Naive thymus-derived CD4-positive, alpha-beta T cell (primary cell): ENCODE measurements at regions of chr3 and their contacts with region 1.

Region 1: GRCh38 chr3:16828815-16829214 is 55.9 kb upstream of the PLCL2 start:
- DNase-seq: peak in 6 of 9 donors; percentile 29 to 59 (median 42)
- ATAC-seq: peak; percentile 80
- H3K4me3 ChIP-seq: no peak overlapping the region
- H3K4me3 Mint-ChIP-seq: no peak overlapping the region
- H3K27ac ChIP-seq: no peak overlapping the region
- H3K27ac Mint-ChIP-seq: peak overlapping the region in 3 of 9 donors; percentile 23 to 53 (median 42)
- H3K4me1 ChIP-seq: peaks cover 11 to 15% of the 10 kb centered on the region in 2 donors
- H3K4me1 Mint-ChIP-seq: peaks cover 16 to 37% (median 19%) of the 10 kb centered on the region in 7 donors
- H3K27me3 ChIP-seq: no peaks in the 10 kb centered on the region
- H3K27me3 Mint-ChIP-seq: peaks cover 0 to 20% (median 0%) of the 10 kb centered on the region in 5 donors

Region 2: GRCh38 chr3:16511681-16512434 is 317.0 kb before region 1 on chr3:
- CTCF ChIA-PET with region 1: no interaction called
- POLR2A ChIA-PET with region 1: no interaction called
- intact Hi-C with region 1: no loop called
- DNase-seq: peak; percentile 43 to 90 (median 86)
- ATAC-seq: peak; percentile 86
- H3K4me3 ChIP-seq: peak overlapping the region; percentile 79
- H3K4me3 Mint-ChIP-seq: peak overlapping the region; percentile 82 to 98 (median 94)
- H3K27ac ChIP-seq: peak overlapping the region; percentile 88
- H3K27ac Mint-ChIP-seq: peak overlapping the region; percentile 87 to 99 (median 95)
- H3K4me1 ChIP-seq: peaks cover 56 to 71% of the 10 kb centered on the region in 2 donors
- H3K4me1 Mint-ChIP-seq: peaks cover 62 to 85% (median 75%) of the 10 kb centered on the region in 7 donors
- H3K27me3 ChIP-seq: no peaks in the 10 kb centered on the region
- H3K27me3 Mint-ChIP-seq: no peaks in the 10 kb centered on the region

Region 3: DNA sequence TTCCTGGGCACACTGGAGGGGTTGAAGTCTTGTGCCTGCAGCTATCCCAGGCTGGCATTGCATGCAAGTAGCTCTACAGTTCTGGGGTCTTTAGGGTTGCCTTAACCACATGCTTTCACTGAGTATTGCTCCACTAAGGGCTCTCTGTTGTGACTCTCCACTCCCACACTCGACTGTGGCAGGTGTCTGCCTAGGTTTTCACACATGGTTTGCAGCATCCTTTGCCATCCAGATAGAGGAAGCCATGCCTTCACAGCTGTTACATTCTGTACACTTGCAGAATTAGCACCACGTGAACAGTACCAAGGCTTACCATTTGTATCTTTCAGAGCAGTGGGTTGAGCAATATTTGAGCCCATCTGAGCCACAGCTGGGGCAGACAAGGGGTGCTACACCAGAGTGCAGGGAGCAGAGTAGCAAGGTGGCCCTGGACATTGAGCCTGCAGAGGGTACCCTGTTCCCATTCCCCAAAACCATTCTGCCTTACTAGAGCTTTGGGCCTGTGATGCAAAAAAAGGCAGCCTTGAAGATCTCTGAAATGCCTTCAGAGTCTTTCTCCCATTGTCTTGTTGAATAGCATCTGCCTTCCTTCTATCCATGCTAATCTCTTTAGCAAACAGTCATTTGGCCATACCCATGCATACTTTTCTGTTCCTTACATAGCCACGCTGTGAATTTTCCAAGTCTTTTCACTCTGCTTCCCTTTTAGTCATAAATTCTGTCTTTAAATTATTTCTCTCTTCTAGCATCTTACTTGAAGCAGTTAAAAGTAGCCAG is 39.3 kb before region 1 on chr3:
- CTCF ChIA-PET with region 1: no interaction called
- POLR2A ChIA-PET with region 1: no interaction called
- intact Hi-C with region 1: no loop called
- DNase-seq: no peak
- ATAC-seq: peak; percentile 86
- H3K4me3 ChIP-seq: no peak overlapping the region
- H3K4me3 Mint-ChIP-seq: no peak overlapping the region
- H3K27ac ChIP-seq: no peak overlapping the region
- H3K27ac Mint-ChIP-seq: no peak overlapping the region
- H3K4me1 ChIP-seq: peaks cover 0 to 17% of the 10 kb centered on the region in 2 donors
- H3K4me1 Mint-ChIP-seq: peaks cover 3 to 17% (median 7%) of the 10 kb centered on the region in 7 donors
- H3K27me3 ChIP-seq: no peaks in the 10 kb centered on the region
- H3K27me3 Mint-ChIP-seq: peaks cover 0 to 10% (median 0%) of the 10 kb centered on the region in 5 donors

Region 4: DNA sequence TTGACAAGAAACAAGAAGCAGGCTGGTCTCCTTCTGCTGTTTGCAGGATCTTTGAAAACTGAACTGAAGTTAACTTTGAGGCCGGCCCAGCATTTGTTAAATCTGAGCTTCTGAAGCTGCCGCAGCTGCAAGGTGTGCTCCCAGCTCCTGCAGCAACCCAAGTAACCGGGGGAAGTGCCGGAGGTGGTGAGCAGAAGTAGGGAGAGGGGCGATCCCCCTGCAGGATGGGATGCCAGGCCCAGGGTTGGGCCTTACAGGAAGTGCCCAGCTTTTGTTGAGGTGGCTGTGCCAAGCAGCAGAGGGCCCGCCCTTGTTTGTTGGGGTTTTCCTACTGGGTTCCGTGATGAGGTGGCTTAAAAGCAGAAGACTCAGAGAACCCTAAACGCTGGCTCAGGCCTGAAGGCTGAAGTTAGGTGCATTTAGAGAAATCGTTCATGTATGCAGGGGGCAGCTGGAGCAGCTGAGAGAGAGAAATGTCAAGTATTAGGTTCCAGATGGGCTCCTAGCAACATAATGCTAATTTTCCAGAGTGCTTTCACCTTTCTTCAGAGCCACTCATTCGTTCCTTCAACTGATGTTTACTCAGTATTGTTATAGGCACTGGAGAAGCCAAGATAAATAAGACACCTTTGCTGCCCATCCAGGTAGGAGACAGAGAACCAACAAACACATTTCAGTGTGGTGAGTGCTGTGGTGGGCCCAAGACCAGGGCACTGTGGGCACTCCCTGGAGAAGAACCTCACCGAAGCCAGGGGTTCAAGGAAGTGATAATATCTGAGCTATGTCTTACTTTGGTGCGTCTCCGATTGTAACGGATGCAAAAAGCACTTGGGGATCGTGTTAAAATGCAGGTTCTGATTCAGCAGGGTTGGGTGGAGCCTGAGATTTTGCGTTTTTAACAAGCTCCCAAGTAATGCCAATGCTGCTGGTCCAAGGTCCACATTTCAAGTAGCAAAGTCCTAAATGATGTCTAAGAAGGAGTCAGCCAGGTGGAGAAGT is 13.8 kb after region 1 on chr3:
- CTCF ChIA-PET with region 1: interaction called, 11 read pairs
- POLR2A ChIA-PET with region 1: interaction called, 16 read pairs
- intact Hi-C with region 1: loop called (anchors 1 kb)
- DNase-seq: peak; percentile 49 to 85 (median 78)
- ATAC-seq: peak; percentile 95
- H3K4me3 ChIP-seq: peak overlapping the region; percentile 61
- H3K4me3 Mint-ChIP-seq: peak overlapping the region; percentile 78 to 93 (median 87)
- H3K27ac ChIP-seq: peak overlapping the region; percentile 76
- H3K27ac Mint-ChIP-seq: peak overlapping the region; percentile 92 to 99 (median 98)
- H3K4me1 ChIP-seq: peaks cover 49 to 51% of the 10 kb centered on the region in 2 donors
- H3K4me1 Mint-ChIP-seq: peaks cover 34 to 96% (median 90%) of the 10 kb centered on the region in 7 donors
- H3K27me3 ChIP-seq: no peaks in the 10 kb centered on the region
- H3K27me3 Mint-ChIP-seq: peaks cover 0 to 6% (median 0%) of the 10 kb centered on the region in 5 donors

Region 5: GRCh38 chr3:16928386-16929132 is 99.7 kb after region 1 on chr3:
- CTCF ChIA-PET with region 1: no interaction called
- POLR2A ChIA-PET with region 1: no interaction called
- intact Hi-C with region 1: loop called in 1 of 2 experiments (anchors 5 kb)
- DNase-seq: no peak
- ATAC-seq: peak; percentile 42
- H3K4me3 ChIP-seq: no peak overlapping the region
- H3K4me3 Mint-ChIP-seq: peak overlapping the region in 8 of 10 donors; percentile 12 to 76 (median 44)
- H3K27ac ChIP-seq: no peak overlapping the region
- H3K27ac Mint-ChIP-seq: peak overlapping the region in 7 of 9 donors; percentile 2 to 74 (median 47)
- H3K4me1 ChIP-seq: peaks cover 6 to 40% of the 10 kb centered on the region in 2 donors
- H3K4me1 Mint-ChIP-seq: peaks cover 50 to 88% (median 83%) of the 10 kb centered on the region in 7 donors
- H3K27me3 ChIP-seq: no peaks in the 10 kb centered on the region
- H3K27me3 Mint-ChIP-seq: no peaks in the 10 kb centered on the region

Region 6: DNA sequence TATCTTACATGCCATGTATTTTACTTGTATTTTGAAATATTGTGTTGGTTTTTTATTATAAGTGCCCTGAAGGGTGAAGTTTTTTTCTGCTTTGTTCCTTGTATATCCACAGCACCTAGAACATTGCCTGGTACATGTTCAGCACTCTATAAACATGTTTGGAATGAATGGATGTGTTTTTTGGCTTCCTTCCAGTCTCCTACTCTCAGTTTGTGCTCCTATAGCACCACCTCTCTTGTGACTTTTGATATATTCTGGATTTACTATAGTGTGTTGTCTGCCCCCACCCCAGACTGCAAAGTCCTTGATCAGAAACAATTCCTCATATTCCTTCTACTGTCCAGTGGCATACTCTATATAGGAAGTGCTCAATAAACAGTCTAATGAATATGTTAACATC is 116.5 kb after region 1 on chr3:
- CTCF ChIA-PET with region 1: no interaction called
- POLR2A ChIA-PET with region 1: no interaction called
- intact Hi-C with region 1: loop called in 1 of 2 experiments (anchors 5 kb)
- DNase-seq: no peak
- ATAC-seq: no peak
- H3K4me3 ChIP-seq: no peak overlapping the region
- H3K4me3 Mint-ChIP-seq: peak overlapping the region in 1 of 10 donors; percentile 30
- H3K27ac ChIP-seq: no peak overlapping the region
- H3K27ac Mint-ChIP-seq: peak overlapping the region in 2 of 9 donors; percentile 8 to 30
- H3K4me1 ChIP-seq: peaks cover 40 to 42% of the 10 kb centered on the region in 2 donors
- H3K4me1 Mint-ChIP-seq: peaks cover 36 to 87% (median 79%) of the 10 kb centered on the region in 7 donors
- H3K27me3 ChIP-seq: no peaks in the 10 kb centered on the region
- H3K27me3 Mint-ChIP-seq: no peaks in the 10 kb centered on the region

Region 7: DNA sequence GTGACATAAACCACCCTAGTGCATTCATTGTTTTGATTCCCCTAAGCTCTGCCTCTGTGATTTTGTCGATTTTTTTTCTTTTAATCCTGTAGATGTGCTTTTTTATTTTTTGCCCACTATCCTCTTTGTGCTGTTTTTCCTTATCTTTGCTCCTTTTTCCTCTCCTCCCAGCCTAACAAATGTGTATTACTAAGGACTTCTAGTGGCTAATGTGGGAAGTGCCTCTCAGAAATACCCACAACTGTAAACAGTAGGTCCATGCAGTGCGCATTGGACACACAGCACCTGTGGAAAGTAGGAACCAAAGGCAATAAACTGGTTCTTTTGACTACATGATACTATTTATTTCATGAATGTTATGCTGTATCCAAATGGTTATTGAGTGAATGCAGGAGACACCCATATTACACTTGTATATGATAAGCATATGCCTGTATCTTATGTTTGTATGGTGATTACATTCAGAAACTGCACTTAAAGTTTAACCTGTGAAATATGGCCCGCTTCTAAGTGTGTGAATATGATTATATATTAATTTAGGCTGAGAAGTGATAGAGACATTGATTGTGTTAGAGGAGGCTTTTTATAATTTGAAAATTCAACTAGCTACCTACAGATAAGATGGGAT is 203.7 kb after region 1 on chr3:
- CTCF ChIA-PET with region 1: no interaction called
- POLR2A ChIA-PET with region 1: no interaction called
- intact Hi-C with region 1: loop called in 1 of 2 experiments (anchors 2 kb)
- DNase-seq: no peak
- ATAC-seq: no peak
- H3K4me3 ChIP-seq: no peak overlapping the region
- H3K4me3 Mint-ChIP-seq: peak overlapping the region in 1 of 10 donors; percentile 11
- H3K27ac ChIP-seq: no peak overlapping the region
- H3K27ac Mint-ChIP-seq: peak overlapping the region in 7 of 9 donors; percentile 4 to 60 (median 17)
- H3K4me1 ChIP-seq: peaks cover 0 to 24% of the 10 kb centered on the region in 2 donors
- H3K4me1 Mint-ChIP-seq: peaks cover 48 to 90% (median 80%) of the 10 kb centered on the region in 7 donors
- H3K27me3 ChIP-seq: no peaks in the 10 kb centered on the region
- H3K27me3 Mint-ChIP-seq: no peaks in the 10 kb centered on the region

Region 8: GRCh38 chr3:17166369-17166768 is 337.6 kb after region 1 on chr3:
- CTCF ChIA-PET with region 1: interaction called, 4 read pairs
- POLR2A ChIA-PET with region 1: no interaction called
- intact Hi-C with region 1: loop called in 1 of 2 experiments (anchors 5 kb)
- DNase-seq: peak in 4 of 9 donors; percentile 7 to 22 (median 14)
- ATAC-seq: no peak
- H3K4me3 ChIP-seq: no peak overlapping the region
- H3K4me3 Mint-ChIP-seq: no peak overlapping the region
- H3K27ac ChIP-seq: no peak overlapping the region
- H3K27ac Mint-ChIP-seq: peak overlapping the region in 2 of 9 donors; percentile 41 to 65
- H3K4me1 ChIP-seq: no peaks in the 10 kb centered on the region
- H3K4me1 Mint-ChIP-seq: peaks cover 0 to 15% (median 0%) of the 10 kb centered on the region in 7 donors
- H3K27me3 ChIP-seq: no peaks in the 10 kb centered on the region
- H3K27me3 Mint-ChIP-seq: no peaks in the 10 kb centered on the region